Calu3 (cell line): ENCODE measurements at regions of chr9 and their contacts with region 1.

Region 1: DNA sequence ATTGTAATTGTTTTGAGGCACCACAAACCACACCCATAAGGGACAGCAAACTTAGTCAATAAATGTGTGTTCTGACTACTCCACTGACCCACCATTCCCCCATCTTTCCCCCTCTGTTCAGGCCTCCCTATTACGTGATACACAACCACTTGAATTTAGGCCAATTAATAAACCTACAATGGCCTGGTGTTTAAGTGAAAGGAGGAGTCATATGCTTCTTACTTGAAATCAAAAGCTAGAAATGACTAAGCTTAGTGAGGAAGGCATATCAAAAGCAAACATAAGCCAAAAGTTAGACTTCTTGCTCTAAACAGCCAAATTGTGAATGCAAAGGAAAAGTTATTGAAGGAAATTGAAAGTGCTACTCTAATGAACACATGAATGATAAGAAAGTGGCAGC is 14.6 kb downstream of the ZBTB43 start:
- DNase-seq: no peak
- H3K4me3 Mint-ChIP-seq: no peak overlapping the region
- H3K27ac Mint-ChIP-seq: no peak overlapping the region
- H3K4me1 Mint-ChIP-seq: peaks cover 3% of the 10 kb centered on the region
- H3K27me3 Mint-ChIP-seq: no peaks in the 10 kb centered on the region
- CTCF ChIP-seq: no peak

Region 2: DNA sequence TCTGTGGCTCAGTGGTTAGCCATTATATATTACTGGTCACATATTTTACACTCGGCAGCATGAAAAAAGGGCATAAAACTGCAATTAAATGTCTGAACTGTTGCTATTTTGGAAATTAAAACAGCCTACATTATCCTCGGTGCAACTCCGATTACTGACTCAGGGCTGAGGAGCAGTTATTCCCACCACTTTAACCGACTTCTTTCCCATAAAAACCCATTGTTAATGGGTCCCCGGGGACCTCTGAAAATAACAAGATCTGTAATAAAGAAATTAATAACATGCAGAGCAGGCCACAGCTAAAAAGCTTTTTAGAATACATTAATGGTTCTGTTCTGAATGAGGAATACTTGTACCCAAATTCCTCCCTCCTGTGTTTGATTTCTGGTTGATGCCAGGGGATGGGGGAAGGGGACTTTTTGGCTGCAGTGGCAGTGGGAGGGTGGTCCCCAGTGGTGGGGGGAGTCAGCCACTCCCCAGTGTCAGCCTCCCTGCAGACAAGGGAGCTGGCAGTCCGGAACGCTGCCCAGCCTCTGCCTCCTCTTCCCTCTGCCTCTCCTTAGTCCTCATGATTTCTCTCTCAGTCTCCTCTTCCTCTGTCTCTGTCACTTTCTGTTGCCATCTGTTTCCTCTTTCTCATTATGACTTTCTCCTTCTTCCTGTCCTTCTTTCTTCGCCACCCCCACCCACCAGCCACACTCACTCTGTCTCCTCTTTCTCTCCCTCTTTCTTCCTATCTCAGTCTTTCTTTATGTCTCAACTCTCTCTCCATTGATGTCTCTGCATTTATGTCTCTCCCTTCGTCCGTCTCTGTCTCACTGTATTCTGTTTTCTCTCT is 73.7 kb before region 1 on chr9:
- CTCF ChIA-PET with region 1: interaction called, 11 read pairs
- intact Hi-C with region 1: no loop called
- DNase-seq: no peak
- H3K4me3 Mint-ChIP-seq: no peak overlapping the region
- H3K27ac Mint-ChIP-seq: no peak overlapping the region
- H3K4me1 Mint-ChIP-seq: no peaks in the 10 kb centered on the region
- H3K27me3 Mint-ChIP-seq: peaks cover 97% of the 10 kb centered on the region
- CTCF ChIP-seq: no peak

Region 3: GRCh38 chr9:127096208-127096607 is 276.7 kb after region 1 on chr9:
- CTCF ChIA-PET with region 1: no interaction called
- intact Hi-C with region 1: no loop called
- DNase-seq: no peak
- H3K4me3 Mint-ChIP-seq: no peak overlapping the region
- H3K27ac Mint-ChIP-seq: no peak overlapping the region
- H3K4me1 Mint-ChIP-seq: no peaks in the 10 kb centered on the region
- H3K27me3 Mint-ChIP-seq: no peaks in the 10 kb centered on the region
- CTCF ChIP-seq: no peak